CD8-positive, alpha-beta T cell (primary cell): ENCODE measurements at regions of chr11 and their contacts with region 1.

Region 1: DNA sequence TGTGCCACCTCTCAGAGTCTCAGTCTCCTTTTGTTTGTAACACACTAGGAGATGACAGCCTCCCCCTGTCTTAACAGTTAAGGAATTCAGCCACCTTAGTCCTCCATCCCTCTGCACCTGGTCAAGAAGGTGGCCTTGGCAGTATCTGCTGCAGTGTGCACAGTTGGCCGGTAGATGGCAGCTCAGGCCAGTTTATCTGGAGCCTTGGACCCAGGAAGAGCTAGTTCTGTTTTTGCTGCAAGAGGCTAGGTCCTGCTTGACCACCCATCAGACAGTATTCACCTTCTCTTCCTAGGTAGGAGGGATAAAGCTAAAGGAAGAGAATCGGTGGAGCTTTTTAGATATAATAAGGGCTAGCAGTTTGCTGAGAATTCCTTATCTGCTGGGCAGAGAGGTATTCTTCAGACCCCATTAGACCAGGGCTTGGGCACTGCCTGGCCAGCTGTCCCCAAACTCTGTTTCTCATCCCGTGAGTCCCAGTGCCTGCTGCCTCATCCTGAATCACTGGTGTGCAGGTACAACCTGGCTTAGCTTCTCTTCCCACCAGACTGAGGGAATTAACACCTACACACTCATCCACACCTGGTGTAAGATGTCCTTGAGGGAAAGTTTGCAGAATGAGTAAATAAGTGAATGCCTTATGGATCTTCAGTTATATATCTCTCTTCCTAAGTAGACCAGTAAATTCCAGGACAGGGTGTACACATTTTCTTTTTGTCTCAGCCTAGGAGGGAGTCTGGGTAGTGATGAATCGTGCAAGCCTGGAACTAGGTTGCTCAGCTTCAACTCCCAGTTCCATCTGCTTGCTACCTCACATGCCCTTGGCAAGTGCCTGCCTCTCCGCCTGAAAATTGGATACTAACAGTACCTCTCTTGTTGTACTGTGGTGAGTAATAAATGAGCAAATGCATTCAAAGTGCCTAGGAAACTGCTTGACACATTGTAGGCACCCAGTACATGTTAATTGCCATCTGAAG is 70.8 kb upstream of the NARS2 start:
- DNase-seq: peak; percentile 24 to 70 (median 50)
- ATAC-seq: peak; percentile 67
- H3K4me3 ChIP-seq: no peak overlapping the region
- H3K4me3 Mint-ChIP-seq: peak overlapping the region; percentile 73
- H3K27ac ChIP-seq: no peak overlapping the region
- H3K27ac Mint-ChIP-seq: no peak overlapping the region
- H3K4me1 ChIP-seq: no peaks in the 10 kb centered on the region
- H3K4me1 Mint-ChIP-seq: peaks cover 13% of the 10 kb centered on the region
- H3K27me3 ChIP-seq: no peaks in the 10 kb centered on the region
- H3K27me3 Mint-ChIP-seq: peaks cover 2% of the 10 kb centered on the region
- CTCF ChIP-seq: peak; percentile 91

Region 2: GRCh38 chr11:78574386-78575381 is 70.8 kb before region 1 on chr11 and contains the start of gene NARS2:
- CTCF ChIA-PET with region 1: no interaction called
- POLR2A ChIA-PET with region 1: no interaction called
- intact Hi-C with region 1: no loop called
- DNase-seq: peak; percentile 94 to 99 (median 98)
- ATAC-seq: peak; percentile 98
- H3K4me3 ChIP-seq: peak within 1 kb of the TSS; percentile 73 to 95
- H3K4me3 Mint-ChIP-seq: peak within 1 kb of the TSS; percentile 94
- H3K27ac ChIP-seq: peak within 1 kb of the TSS; percentile 77 to 88
- H3K27ac Mint-ChIP-seq: peak within 1 kb of the TSS; percentile 99
- H3K4me1 ChIP-seq: peaks cover 16% of the 10 kb centered on the region
- H3K4me1 Mint-ChIP-seq: peaks cover 39% of the 10 kb centered on the region
- H3K27me3 ChIP-seq: no peaks in the 10 kb centered on the region
- H3K27me3 Mint-ChIP-seq: peaks cover 4% of the 10 kb centered on the region
- CTCF ChIP-seq: no peak
- total RNA-seq, gene NARS2: 6.3 to 8.3 TPM

Region 3: GRCh38 chr11:78669249-78669648 is 23.7 kb after region 1 on chr11:
- CTCF ChIA-PET with region 1: interaction called, 87 read pairs
- POLR2A ChIA-PET with region 1: no interaction called
- intact Hi-C with region 1: no loop called
- DNase-seq: no peak
- ATAC-seq: no peak
- H3K4me3 ChIP-seq: no peak overlapping the region
- H3K4me3 Mint-ChIP-seq: no peak overlapping the region
- H3K27ac ChIP-seq: no peak overlapping the region
- H3K27ac Mint-ChIP-seq: no peak overlapping the region
- H3K4me1 ChIP-seq: no peaks in the 10 kb centered on the region
- H3K4me1 Mint-ChIP-seq: no peaks in the 10 kb centered on the region
- H3K27me3 ChIP-seq: no peaks in the 10 kb centered on the region
- H3K27me3 Mint-ChIP-seq: no peaks in the 10 kb centered on the region
- CTCF ChIP-seq: no peak

Region 4: DNA sequence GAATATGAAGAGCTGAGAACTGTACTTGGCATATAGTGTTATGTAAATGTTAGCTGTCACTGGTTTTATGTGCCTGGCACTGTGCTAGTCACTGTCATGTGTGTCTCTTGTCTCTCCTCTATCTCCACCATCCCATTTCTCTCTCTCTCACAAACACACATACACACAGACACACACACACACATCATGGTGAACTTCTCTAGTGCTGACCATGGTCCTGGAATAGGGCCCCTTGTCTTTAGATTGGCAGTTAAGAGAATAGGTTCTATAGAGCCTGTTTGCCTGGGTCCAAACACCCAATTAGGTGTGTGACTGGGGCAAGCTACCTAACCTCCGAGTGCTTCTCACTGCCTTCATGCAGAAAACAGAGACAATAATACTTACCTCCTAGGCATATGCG is 38.9 kb after region 1 on chr11:
- CTCF ChIA-PET with region 1: interaction called, 11 read pairs
- POLR2A ChIA-PET with region 1: no interaction called
- intact Hi-C with region 1: no loop called
- DNase-seq: no peak
- ATAC-seq: no peak
- H3K4me3 ChIP-seq: no peak overlapping the region
- H3K4me3 Mint-ChIP-seq: no peak overlapping the region
- H3K27ac ChIP-seq: no peak overlapping the region
- H3K27ac Mint-ChIP-seq: no peak overlapping the region
- H3K4me1 ChIP-seq: no peaks in the 10 kb centered on the region
- H3K4me1 Mint-ChIP-seq: no peaks in the 10 kb centered on the region
- H3K27me3 ChIP-seq: no peaks in the 10 kb centered on the region
- H3K27me3 Mint-ChIP-seq: peaks cover 16% of the 10 kb centered on the region
- CTCF ChIP-seq: no peak

Region 5: GRCh38 chr11:79076526-79077115 is 431.1 kb after region 1 on chr11:
- CTCF ChIA-PET with region 1: interaction called, 8 read pairs
- POLR2A ChIA-PET with region 1: no interaction called
- intact Hi-C with region 1: loop called in 1 of 2 experiments (anchors 1 kb)
- DNase-seq: peak in 3 of 9 experiments; percentile 13 to 31 (median 22)
- ATAC-seq: no peak
- H3K4me3 ChIP-seq: no peak overlapping the region
- H3K4me3 Mint-ChIP-seq: no peak overlapping the region
- H3K27ac ChIP-seq: no peak overlapping the region
- H3K27ac Mint-ChIP-seq: no peak overlapping the region
- H3K4me1 ChIP-seq: no peaks in the 10 kb centered on the region
- H3K4me1 Mint-ChIP-seq: no peaks in the 10 kb centered on the region
- H3K27me3 ChIP-seq: no peaks in the 10 kb centered on the region
- H3K27me3 Mint-ChIP-seq: no peaks in the 10 kb centered on the region
- CTCF ChIP-seq: no peak